Left cardiac atrium (tissue), 4 donors: ENCODE measurements at regions of chr9 and their contacts with region 1.

Region 1: DNA sequence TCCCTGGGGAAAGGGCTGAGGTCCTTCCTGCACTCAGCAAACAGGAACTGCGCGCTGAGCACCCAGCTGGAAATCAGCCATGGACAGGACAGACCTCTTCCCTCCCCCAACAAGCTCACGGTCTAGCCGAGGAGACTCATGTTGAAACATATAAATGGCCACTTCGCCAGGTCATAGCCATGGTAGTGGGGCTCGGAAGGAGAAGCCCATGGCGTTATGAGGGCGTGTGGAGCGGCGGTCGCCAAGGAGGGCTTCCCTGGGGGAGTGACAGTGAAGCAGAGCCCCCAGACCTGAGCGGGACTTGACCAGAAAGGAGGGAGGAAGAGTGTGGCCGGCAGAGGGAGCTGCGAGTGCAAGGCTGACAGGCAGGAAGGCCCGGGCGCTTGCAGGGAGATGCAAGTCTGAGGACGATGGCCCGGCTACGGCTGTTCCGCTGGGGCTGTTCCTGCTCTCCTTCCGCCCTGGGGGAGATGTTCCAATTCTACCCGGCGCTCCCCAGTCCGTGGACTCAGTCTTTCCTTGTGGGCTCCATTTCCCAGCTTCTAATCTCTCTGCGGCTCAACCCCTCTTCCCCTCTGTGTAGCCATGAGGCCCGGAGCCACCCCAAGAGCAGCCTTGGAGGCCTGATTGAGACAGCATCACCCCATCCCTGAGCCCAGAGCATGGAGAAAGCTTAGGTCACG is 43.9 kb upstream of the PRRC2B start:
- DNase-seq: peak; percentile 93
- ATAC-seq: peak; percentile 95 to 96

Region 2: GRCh38 chr9:131747356-131747755 is 397.3 kb after region 1 on chr9:
- intact Hi-C with region 1: loop called (anchors 5 kb)
- DNase-seq: no peak
- ATAC-seq: peak in 1 of 2 donors; percentile 51